ENCODE measurements at regions of chr10 and their contacts with region 1.

Region 1: GRCh38 chr10:26682931-26683330 is 14.6 kb upstream of the PDSS1 start:
- DNase-seq: peak in 4 of 5 donors; percentile 47 to 67 (median 58)
- H3K4me3 ChIP-seq: no peak overlapping the region
- H3K4me3 Mint-ChIP-seq: peak overlapping the region in 6 of 8 donors; percentile 7 to 77 (median 40)
- H3K27ac ChIP-seq: no peak overlapping the region
- H3K27ac Mint-ChIP-seq: peak overlapping the region; percentile 32 to 96 (median 88)
- H3K4me1 ChIP-seq: peaks cover 15% of the 10 kb centered on the region
- H3K4me1 Mint-ChIP-seq: peaks cover 14 to 24% (median 19%) of the 10 kb centered on the region in 4 donors
- H3K27me3 ChIP-seq: no peaks in the 10 kb centered on the region
- H3K27me3 Mint-ChIP-seq: peaks cover 1 to 2% of the 10 kb centered on the region in 2 donors

Region 2: GRCh38 chr10:26259341-26259740 is 423.6 kb before region 1 on chr10:
- CTCF ChIA-PET with region 1: no interaction called
- POLR2A ChIA-PET with region 1: no interaction called
- intact Hi-C with region 1: no loop called
- DNase-seq: no peak
- H3K4me3 ChIP-seq: no peak overlapping the region
- H3K4me3 Mint-ChIP-seq: no peak overlapping the region
- H3K27ac ChIP-seq: no peak overlapping the region
- H3K27ac Mint-ChIP-seq: no peak overlapping the region
- H3K4me1 ChIP-seq: no peaks in the 10 kb centered on the region
- H3K4me1 Mint-ChIP-seq: no peaks in the 10 kb centered on the region
- H3K27me3 ChIP-seq: peaks cover 5% of the 10 kb centered on the region
- H3K27me3 Mint-ChIP-seq: peaks cover 12 to 21% of the 10 kb centered on the region in 2 donors

Region 3: GRCh38 chr10:26528715-26529393 is 154.1 kb before region 1 on chr10:
- CTCF ChIA-PET with region 1: no interaction called
- POLR2A ChIA-PET with region 1: no interaction called
- intact Hi-C with region 1: no loop called
- DNase-seq: no peak
- H3K4me3 ChIP-seq: no peak overlapping the region
- H3K4me3 Mint-ChIP-seq: no peak overlapping the region
- H3K27ac ChIP-seq: no peak overlapping the region
- H3K27ac Mint-ChIP-seq: peak overlapping the region in 5 of 7 donors; percentile 14 to 52 (median 35)
- H3K4me1 ChIP-seq: no peaks in the 10 kb centered on the region
- H3K4me1 Mint-ChIP-seq: peaks cover 0 to 17% (median 8%) of the 10 kb centered on the region in 4 donors
- H3K27me3 ChIP-seq: no peaks in the 10 kb centered on the region
- H3K27me3 Mint-ChIP-seq: no peaks in the 10 kb centered on the region

Region 4: DNA sequence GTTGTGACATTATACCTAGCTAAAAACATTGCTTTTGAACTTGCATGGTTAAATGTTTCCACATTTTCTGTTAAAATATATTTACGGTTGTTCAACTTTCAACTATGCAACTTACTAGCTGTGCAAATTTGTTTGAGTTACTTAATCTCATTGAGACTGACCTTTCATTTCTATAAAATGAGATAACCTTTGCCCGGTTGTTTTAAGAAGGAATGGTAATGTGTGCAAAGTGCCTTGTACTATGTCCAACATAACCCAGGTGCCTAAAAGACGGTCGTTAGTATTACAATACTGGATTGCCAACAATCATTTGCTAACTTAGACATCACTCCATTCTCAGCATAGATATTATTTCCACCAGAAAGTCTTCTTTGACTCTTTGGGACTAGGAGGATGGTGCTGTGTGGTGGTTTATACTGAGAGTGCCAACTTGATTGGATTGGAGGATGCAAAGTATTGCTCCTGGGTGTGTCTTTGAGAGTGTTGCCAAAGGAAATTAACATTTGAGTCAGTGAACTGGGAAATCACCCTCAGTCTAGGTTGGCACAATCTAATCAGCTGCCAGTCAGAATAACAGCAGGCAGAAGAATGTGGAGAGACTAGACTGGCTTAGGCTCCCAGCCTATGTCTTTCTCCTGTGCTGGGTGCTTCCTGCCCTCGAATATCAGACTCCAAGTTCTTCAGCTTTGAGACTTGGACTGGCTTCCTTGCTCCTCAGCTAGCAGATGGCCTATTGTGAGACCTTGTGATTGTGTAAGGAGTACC is 70.6 kb before region 1 on chr10:
- CTCF ChIA-PET with region 1: no interaction called
- POLR2A ChIA-PET with region 1: no interaction called
- intact Hi-C with region 1: loop called (anchors 10 kb)
- DNase-seq: no peak
- H3K4me3 ChIP-seq: no peak overlapping the region
- H3K4me3 Mint-ChIP-seq: no peak overlapping the region
- H3K27ac ChIP-seq: no peak overlapping the region
- H3K27ac Mint-ChIP-seq: no peak overlapping the region
- H3K4me1 ChIP-seq: no peaks in the 10 kb centered on the region
- H3K4me1 Mint-ChIP-seq: no peaks in the 10 kb centered on the region
- H3K27me3 ChIP-seq: no peaks in the 10 kb centered on the region
- H3K27me3 Mint-ChIP-seq: peaks cover 9 to 12% of the 10 kb centered on the region in 2 donors

Region 5: DNA sequence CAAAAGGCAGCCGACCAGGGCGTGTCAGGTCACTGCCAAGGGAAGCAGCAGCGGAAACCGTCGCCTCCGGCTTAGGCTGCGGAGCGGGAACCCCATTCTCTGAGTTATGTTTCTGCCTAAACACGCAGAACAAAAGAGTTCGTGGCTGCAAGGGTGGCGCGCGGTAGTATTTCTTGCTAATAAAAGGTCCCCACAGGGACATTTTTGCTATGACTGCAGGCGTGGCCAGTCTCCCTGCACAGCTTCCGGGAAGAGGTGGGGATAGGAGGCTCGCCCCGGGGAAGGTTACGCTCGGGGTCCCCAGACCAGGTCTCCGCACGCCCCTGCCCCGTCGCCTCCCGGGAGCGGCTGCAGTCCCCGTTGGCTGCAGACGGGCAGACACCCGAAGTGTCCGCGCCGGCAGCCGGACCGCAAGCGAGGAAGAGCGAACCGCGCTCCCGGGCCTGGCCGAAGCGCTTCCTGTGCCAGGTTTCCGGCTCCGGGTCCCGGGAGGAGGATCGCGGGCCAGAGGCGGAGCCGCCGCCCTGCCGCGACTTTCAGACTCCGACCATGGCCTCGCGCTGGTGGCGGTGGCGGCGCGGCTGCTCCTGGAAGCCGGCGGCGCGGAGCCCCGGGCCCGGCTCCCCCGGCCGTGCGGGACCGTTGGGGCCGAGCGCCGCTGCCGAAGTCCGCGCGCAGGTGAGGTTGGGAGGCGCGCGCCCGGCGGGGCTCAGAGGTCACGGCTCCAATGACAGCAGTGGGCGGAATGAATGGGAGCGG is 14.4 kb after region 1 on chr10 and contains the start of gene PDSS1:
- CTCF ChIA-PET with region 1: interaction called, 11 read pairs
- POLR2A ChIA-PET with region 1: interaction called, 6 read pairs
- intact Hi-C with region 1: no loop called
- DNase-seq: peak; percentile 53 to 72 (median 56)
- H3K4me3 ChIP-seq: peak within 1 kb of the TSS; percentile 37 to 81
- H3K4me3 Mint-ChIP-seq: peak within 1 kb of the TSS; percentile 86 to 98 (median 97)
- H3K27ac ChIP-seq: peak within 1 kb of the TSS; percentile 50
- H3K27ac Mint-ChIP-seq: peak within 1 kb of the TSS; percentile 88 to 96 (median 95)
- H3K4me1 ChIP-seq: peaks cover 16% of the 10 kb centered on the region
- H3K4me1 Mint-ChIP-seq: peaks cover 19 to 32% (median 28%) of the 10 kb centered on the region in 4 donors
- H3K27me3 ChIP-seq: no peaks in the 10 kb centered on the region
- H3K27me3 Mint-ChIP-seq: no peaks in the 10 kb centered on the region
- total RNA-seq, gene PDSS1: 3.1 to 3.3 TPM

Region 6: GRCh38 chr10:26799342-26799741 is 116.4 kb after region 1 on chr10:
- CTCF ChIA-PET with region 1: no interaction called
- POLR2A ChIA-PET with region 1: no interaction called
- intact Hi-C with region 1: no loop called
- DNase-seq: peak in 3 of 5 donors; percentile 6 to 11 (median 8)
- H3K4me3 ChIP-seq: no peak overlapping the region
- H3K4me3 Mint-ChIP-seq: peak overlapping the region in 4 of 8 donors; percentile 47 to 72 (median 59)
- H3K27ac ChIP-seq: no peak overlapping the region
- H3K27ac Mint-ChIP-seq: peak overlapping the region in 2 of 7 donors; percentile 26 to 33
- H3K4me1 ChIP-seq: peaks cover 46% of the 10 kb centered on the region
- H3K4me1 Mint-ChIP-seq: peaks cover 50 to 81% (median 66%) of the 10 kb centered on the region in 4 donors
- H3K27me3 ChIP-seq: no peaks in the 10 kb centered on the region
- H3K27me3 Mint-ChIP-seq: no peaks in the 10 kb centered on the region

Region 7: GRCh38 chr10:26890956-26891355 is 208.0 kb after region 1 on chr10:
- CTCF ChIA-PET with region 1: no interaction called
- POLR2A ChIA-PET with region 1: no interaction called
- intact Hi-C with region 1: no loop called
- DNase-seq: peak in 4 of 5 donors; percentile 18 to 34 (median 26)
- H3K4me3 ChIP-seq: no peak overlapping the region
- H3K4me3 Mint-ChIP-seq: no peak overlapping the region
- H3K27ac ChIP-seq: no peak overlapping the region
- H3K27ac Mint-ChIP-seq: peak overlapping the region in 2 of 7 donors; percentile 8 to 41
- H3K4me1 ChIP-seq: no peaks in the 10 kb centered on the region
- H3K4me1 Mint-ChIP-seq: no peaks in the 10 kb centered on the region
- H3K27me3 ChIP-seq: no peaks in the 10 kb centered on the region
- H3K27me3 Mint-ChIP-seq: peaks cover 2 to 5% of the 10 kb centered on the region in 2 donors

Measured in CD4-positive, alpha-beta memory T cell (primary cell).